ENCODE measurements at regions of chr11 and their contacts with region 1.

Region 1: DNA sequence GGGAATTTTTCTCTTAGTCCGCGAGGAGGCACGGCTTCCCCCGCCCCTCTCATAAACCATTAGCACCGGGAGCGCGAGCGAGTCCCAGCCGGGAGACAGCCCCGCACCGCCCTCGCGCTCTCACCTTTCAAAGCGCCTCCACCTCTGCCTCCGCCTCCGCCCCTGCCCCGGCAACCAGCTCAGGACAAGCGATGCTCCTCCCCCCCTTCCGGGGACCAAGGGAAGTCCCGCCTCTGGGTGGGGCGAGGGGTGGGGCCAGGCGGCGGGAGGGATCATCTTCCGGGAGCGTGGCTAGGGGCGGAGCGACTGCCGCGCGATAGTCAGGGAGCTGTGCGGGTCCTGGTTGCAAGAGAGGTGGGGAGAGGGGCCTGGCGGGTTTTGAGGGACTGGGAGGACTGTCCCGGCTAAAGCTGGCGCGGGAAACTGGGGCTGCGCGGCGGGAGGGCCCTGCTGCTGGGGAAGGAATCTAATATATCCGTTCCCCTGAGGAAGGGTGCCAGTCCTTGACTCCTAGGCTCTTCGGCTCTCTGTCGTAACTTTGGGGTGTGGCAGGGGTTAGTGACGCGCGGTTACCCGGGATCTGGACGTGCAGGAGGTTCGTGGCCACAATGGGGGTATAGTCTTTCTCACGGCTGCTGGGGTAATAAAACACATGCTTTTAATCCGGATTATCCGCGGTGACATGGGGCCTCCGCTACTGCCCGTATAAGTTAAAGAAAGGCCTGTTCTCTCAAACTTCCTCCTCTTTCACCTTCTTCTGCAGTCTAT is at the starts of genes CCDC82 and JRKL:
- H3K4me3 Mint-ChIP-seq: peak within 1 kb of the TSS; percentile 90
- H3K27ac Mint-ChIP-seq: peak within 1 kb of the TSS; percentile 92
- H3K4me1 Mint-ChIP-seq: peaks cover 30% of the 10 kb centered on the region
- H3K27me3 Mint-ChIP-seq: no peaks in the 10 kb centered on the region

Region 2: DNA sequence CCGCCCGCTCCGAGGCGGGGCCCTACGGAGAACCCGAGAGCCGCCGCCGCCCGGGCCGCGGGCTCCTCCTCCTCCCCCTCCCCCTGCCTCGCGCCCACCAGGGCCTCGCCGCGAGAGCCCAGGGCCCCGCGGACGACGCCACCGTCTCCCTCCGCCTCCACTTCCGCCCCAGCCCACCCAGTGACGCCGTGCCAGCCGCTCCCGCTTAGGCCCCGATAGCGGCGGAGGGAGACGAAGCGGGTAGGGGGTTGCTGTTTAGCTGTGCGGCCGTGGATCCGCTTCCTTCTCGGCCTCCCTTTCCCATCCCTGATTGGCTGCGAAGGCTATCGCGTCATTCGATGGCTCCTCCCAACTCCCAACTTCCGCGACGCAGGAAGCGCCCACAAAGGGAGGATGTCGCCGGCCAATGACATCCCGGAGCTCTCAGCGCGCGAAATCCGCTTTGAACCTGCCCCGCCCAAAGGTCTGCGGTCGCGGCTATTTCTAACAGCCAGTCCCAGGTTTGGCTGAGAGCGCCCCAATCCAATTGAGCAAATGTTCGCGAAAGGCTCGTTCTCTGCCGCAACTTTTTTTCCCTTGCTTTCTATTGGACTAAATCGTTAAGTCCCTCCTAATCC is 600.3 kb before region 1 on chr11 and contains the start of gene FAM76B:
- intact Hi-C with region 1: loop called (anchors 1 kb)
- H3K4me3 Mint-ChIP-seq: peak within 1 kb of the TSS; percentile 99
- H3K27ac Mint-ChIP-seq: peak within 1 kb of the TSS; percentile 100
- H3K4me1 Mint-ChIP-seq: peaks cover 31% of the 10 kb centered on the region
- H3K27me3 Mint-ChIP-seq: no peaks in the 10 kb centered on the region

Region 3: GRCh38 chr11:95835768-95836488 is 554.0 kb before region 1 on chr11:
- intact Hi-C with region 1: loop called (anchors 1 kb)
- H3K4me3 Mint-ChIP-seq: no peak overlapping the region
- H3K27ac Mint-ChIP-seq: no peak overlapping the region
- H3K4me1 Mint-ChIP-seq: no peaks in the 10 kb centered on the region
- H3K27me3 Mint-ChIP-seq: no peaks in the 10 kb centered on the region

Region 4: DNA sequence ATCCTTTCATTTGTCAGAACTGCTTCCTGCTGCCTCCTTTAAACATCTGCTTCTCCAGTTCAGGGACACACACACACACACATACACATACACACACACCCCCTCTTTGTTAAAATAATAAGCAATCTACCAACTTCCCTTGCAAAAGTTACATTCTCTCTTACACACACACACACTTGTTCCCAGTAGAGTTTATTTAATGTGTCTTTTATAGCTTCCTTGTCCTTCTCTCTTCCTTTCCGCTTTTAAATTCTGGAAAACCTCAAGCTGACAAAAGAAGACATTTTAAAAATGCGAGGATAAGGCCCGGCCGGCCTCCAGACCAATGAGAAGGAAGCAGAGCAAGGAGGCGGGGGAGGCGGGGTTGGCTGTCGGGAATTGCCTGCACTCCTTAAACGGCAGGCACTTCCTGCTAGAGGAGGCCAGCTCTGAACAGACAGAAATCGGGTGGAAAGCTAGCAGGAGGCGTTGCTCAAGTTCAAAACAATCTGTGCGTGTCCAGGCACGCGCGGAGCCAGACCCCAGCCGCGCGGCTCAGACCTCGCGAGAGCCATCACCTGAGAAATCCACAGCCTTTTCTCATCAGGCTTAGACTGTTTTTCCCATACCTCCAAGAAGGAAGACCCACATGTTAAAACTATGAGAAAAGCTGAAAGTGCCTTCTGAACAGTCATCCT is 146.8 kb before region 1 on chr11:
- intact Hi-C with region 1: loop called (anchors 5 kb)
- H3K4me3 Mint-ChIP-seq: peak overlapping the region; percentile 76
- H3K27ac Mint-ChIP-seq: peak overlapping the region; percentile 83
- H3K4me1 Mint-ChIP-seq: peaks cover 39% of the 10 kb centered on the region
- H3K27me3 Mint-ChIP-seq: no peaks in the 10 kb centered on the region

Region 5: GRCh38 chr11:96373826-96374225 is 16.1 kb before region 1 on chr11:
- intact Hi-C with region 1: no loop called
- H3K4me3 Mint-ChIP-seq: no peak overlapping the region
- H3K27ac Mint-ChIP-seq: no peak overlapping the region
- H3K4me1 Mint-ChIP-seq: peaks cover 5% of the 10 kb centered on the region
- H3K27me3 Mint-ChIP-seq: no peaks in the 10 kb centered on the region

Region 6: GRCh38 chr11:96424693-96425092 is 34.8 kb after region 1 on chr11:
- intact Hi-C with region 1: no loop called
- H3K4me3 Mint-ChIP-seq: no peak overlapping the region
- H3K27ac Mint-ChIP-seq: no peak overlapping the region
- H3K4me1 Mint-ChIP-seq: no peaks in the 10 kb centered on the region
- H3K27me3 Mint-ChIP-seq: peaks cover 5% of the 10 kb centered on the region